HEK293 (cell line): ENCODE measurements at regions of chr18 and their contacts with region 1.

Region 1: GRCh38 chr18:31819106-31819924 is 58.6 kb upstream of the SLC25A52 start:
- H3K4me3 ChIP-seq: no peak overlapping the region
- H3K27ac ChIP-seq: no peak overlapping the region
- H3K4me1 ChIP-seq: no peaks in the 10 kb centered on the region
- CTCF ChIP-seq: peak; percentile 45; the same call in 1 of the 2 replicates

Region 2: DNA sequence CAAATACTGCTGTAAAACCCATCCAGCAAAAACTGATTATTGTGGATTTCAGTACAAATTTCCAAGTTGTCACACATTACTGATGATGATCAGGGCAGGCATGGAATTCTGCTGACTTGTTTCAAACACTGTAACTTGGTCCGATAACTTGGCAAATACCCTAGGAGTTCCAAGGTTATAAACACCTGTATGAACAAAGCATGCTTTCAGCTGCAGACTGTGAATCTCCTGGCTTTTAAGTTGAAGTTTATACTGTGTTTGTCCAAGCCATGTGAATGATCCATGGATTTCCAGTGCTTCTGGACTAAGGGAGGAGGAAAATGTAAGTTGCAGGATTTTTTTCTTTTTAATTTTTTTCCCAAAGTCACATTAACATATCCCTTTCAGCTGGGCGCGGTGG is 11.4 kb after region 1 on chr18:
- CTCF ChIA-PET with region 1: interaction called, 11 read pairs
- POLR2A ChIA-PET with region 1: no interaction called
- H3K4me3 ChIP-seq: no peak overlapping the region
- H3K27ac ChIP-seq: no peak overlapping the region
- H3K4me1 ChIP-seq: no peaks in the 10 kb centered on the region
- CTCF ChIP-seq: no peak

Region 3: DNA sequence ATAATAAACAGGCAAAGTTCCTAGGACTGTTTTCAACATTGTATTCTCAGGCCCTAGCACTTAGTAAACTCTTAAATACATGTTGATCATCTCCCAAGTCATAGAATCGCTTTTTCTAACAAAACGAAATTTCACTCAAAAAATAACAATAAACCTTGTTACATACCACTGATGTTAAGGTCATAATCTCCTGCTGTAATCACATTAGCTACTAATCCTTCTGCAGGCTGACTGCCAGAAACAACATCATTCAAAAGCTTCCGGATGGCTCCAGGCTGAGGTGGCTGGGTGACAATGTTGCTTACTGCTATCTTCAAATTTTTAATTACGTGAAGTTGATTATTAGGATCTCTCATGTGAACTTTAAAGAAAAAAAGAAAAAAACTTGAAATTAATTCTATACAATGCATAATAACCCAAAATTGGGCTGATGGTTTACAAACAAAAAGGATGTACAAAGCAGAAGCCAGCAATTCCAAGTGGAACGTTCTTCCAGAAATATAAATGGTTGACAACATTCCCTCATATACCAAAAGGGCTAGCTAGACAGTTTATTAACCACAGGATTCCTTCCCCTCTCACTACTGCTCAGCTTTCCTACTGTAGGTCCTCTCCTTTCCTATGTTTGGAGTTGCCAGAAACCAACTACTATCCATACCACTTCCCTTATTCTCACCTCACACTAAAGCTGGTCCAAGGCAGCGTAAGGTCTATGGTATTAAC is 112.0 kb after region 1 on chr18:
- CTCF ChIA-PET with region 1: no interaction called
- POLR2A ChIA-PET with region 1: no interaction called
- H3K4me3 ChIP-seq: no peak overlapping the region
- H3K27ac ChIP-seq: no peak overlapping the region
- H3K4me1 ChIP-seq: peaks cover 12% of the 10 kb centered on the region
- CTCF ChIP-seq: no peak

Region 4: DNA sequence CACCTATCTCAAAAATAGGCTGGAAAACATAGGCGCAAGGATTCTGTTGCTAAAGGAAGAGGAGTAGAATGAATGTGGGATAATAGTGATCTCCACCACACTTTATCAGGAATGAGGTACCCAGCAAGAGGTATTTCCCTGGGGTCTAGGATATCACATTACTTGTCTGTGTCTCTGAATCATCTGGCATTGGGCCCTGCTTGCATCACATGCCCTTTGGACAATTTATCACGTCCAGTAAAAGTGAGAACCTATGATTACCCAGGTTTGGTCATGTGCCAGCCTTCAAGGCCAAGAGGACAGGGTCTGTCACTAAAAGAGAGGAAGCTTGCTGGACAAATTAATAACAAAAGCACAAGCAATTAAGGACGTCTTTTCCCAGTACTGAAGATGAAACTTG is 135.0 kb after region 1 on chr18:
- CTCF ChIA-PET with region 1: interaction called, 16 read pairs
- POLR2A ChIA-PET with region 1: no interaction called
- H3K4me3 ChIP-seq: no peak overlapping the region
- H3K27ac ChIP-seq: no peak overlapping the region
- H3K4me1 ChIP-seq: no peaks in the 10 kb centered on the region
- CTCF ChIP-seq: no peak

Region 5: GRCh38 chr18:32092422-32093101 is 273.2 kb after region 1 on chr18:
- CTCF ChIA-PET with region 1: no interaction called
- POLR2A ChIA-PET with region 1: no interaction called
- H3K4me3 ChIP-seq: peak overlapping the region; percentile 90
- H3K27ac ChIP-seq: peak overlapping the region; percentile 97
- H3K4me1 ChIP-seq: peaks cover 4% of the 10 kb centered on the region; the same call in 1 of the 2 replicates
- CTCF ChIP-seq: no peak; the same call in 1 of the 2 replicates

Region 6: DNA sequence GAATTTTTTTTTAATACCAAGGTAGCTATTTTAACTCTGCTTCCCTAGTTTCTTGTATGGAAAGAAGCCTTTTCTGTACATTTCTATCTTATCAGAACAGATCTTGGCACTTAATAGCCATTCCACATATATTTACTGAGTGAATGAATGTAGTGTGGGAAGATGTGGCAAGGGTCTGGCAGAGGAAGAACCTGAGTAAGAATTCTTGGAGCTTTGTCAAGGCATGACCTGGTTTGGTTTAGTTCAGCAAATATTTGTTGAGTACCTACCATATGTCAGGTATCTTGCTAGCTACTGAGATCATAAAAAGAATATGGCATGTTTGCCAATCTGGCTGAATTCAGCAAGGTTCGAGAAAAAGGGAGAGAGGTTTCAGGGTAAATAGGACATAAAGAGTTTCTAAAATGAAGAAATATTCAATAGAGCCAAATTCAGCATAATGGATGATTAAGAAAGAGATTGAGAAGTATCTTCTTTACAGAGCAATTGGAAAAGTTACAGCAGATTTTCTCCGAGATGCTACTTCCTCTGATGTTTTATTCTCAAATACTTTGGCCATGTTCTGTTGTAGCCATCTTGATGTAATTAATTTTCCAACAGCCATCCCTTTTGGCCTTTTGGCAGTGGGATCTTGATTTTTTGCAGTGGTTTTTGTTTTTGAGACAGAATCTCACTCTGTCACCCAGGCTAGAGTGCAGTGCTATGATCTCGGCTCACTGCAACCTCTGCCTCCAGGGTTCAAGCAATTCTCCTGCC is 348.8 kb after region 1 on chr18:
- CTCF ChIA-PET with region 1: no interaction called
- POLR2A ChIA-PET with region 1: no interaction called
- H3K4me3 ChIP-seq: no peak overlapping the region
- H3K27ac ChIP-seq: no peak overlapping the region
- H3K4me1 ChIP-seq: no peaks in the 10 kb centered on the region
- CTCF ChIP-seq: no peak